ENCODE measurements at regions of chr2 and their contacts with region 1.

Region 1: DNA sequence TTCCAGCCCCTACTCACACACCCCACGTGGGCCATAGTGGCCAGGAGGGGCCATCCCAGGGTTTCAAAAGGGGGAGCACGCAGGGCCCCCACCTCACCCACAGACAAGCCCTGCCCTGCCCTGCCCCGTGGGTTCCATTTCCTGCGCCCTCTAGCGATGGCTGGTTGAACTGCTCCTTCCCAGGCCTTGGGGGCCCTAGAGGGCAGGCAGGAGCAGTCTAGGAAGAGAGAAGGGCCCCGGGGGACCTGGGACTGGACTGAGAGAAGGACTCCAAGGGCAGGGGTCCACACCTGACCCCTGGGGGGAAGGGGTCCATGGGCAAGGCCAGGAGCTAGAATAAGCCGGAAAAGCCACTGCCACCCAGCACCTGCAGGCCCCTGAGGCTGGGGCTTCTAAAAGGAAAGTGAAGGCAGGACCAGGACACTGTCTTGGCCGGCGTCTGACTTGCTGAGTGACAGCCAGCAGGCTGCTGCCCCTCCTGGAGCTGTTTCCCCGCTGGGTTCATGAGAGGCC is 10.1 kb downstream of the CYP26B1 start:
- DNase-seq: no peak
- H3K4me3 ChIP-seq: no peak overlapping the region
- CTCF ChIP-seq: peak; percentile 96

Region 2: DNA sequence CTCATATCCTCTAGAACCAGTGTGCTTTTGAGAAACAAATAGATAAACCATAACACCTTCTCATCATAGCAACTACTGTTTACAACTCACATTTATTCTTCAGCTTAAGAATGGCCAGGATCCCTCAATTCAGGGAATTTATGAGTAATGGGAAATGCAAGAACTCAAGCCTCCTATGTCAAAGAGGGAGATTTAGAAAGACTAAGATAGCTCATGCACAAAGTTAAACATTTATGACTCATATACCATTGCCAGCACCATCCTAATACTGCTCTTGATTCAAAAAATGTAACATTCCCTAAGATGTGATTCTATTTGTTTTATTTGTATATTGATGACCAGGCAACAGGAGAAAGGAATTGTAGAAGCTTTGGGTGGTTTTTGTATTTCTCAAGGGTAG is 162.7 kb before region 1 on chr2:
- CTCF ChIA-PET with region 1: no interaction called
- POLR2A ChIA-PET with region 1: no interaction called
- DNase-seq: peak; percentile 10
- H3K4me3 ChIP-seq: no peak overlapping the region
- CTCF ChIP-seq: no peak

Region 3: DNA sequence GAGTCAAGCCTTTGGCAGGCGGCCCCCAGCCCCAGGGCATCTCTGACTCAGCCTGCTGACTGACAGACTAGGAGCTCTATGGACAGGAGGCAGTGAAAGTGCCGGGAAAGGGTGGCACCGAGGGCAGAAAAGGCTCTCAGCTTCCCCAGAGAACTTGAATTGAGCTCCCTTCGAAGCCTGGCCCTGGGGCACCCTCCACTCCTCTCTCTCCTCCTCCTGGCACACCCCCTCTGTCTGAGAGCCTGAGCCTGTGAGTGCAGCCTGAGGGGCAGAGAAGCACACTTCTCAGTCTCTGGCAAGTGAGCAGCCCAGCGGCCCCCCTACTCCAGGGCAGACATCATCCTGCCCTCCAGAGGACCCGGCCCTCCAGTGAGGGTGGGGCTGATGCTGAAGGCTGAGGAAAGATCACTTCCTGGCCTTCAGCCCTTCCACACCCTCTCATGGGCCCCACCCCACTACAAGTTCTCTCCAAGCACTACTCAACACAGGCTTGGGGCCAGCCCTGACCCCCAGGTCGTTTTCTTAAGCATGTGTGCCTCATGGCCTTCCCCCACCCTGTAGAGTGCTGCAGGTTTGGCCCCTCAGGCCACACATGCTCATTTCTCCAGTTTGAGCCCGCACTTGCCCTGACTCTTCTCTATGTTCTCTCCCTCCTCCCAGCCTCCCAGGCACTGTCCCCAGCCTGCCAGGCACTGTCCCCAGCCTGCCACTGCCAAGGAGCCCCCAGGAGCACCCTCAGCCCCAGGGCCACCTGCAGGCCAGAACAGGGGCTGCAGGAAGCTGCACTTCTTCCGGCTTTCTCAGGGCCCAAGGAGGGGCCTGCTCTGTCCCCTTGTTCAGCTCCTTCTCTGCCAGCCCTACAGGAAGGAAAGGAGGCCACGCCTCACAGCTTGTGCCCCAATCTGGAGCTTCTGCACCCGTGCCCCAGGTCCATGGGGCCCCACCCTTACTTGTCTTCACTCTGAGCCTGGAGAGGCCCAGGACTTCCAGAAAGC is 21.7 kb before region 1 on chr2:
- CTCF ChIA-PET with region 1: interaction called, 28 read pairs
- POLR2A ChIA-PET with region 1: no interaction called
- DNase-seq: peak; percentile 40
- H3K4me3 ChIP-seq: no peak overlapping the region
- CTCF ChIP-seq: peak; percentile 54

Region 4: GRCh38 chr2:72124376-72124775 is 13.2 kb before region 1 on chr2:
- CTCF ChIA-PET with region 1: interaction called, 28 read pairs
- POLR2A ChIA-PET with region 1: no interaction called
- DNase-seq: peak; percentile 5
- H3K4me3 ChIP-seq: no peak overlapping the region
- CTCF ChIP-seq: no peak

Region 5: GRCh38 chr2:72340665-72341064 is 203.1 kb after region 1 on chr2:
- CTCF ChIA-PET with region 1: no interaction called
- POLR2A ChIA-PET with region 1: no interaction called
- DNase-seq: no peak
- H3K4me3 ChIP-seq: no peak overlapping the region
- CTCF ChIP-seq: no peak